CD8-positive, alpha-beta memory T cell (primary cell): ENCODE measurements at regions of chr6 and their contacts with region 1.

Region 1: GRCh38 chr6:11198663-11199603 is 33.5 kb downstream of the NEDD9 start:
- DNase-seq: peak; percentile 7 to 65 (median 34)
- H3K4me3 ChIP-seq: peak overlapping the region; percentile 17
- H3K4me3 Mint-ChIP-seq: peak overlapping the region; percentile 1 to 85 (median 60)
- H3K27ac ChIP-seq: peak overlapping the region; percentile 48
- H3K27ac Mint-ChIP-seq: peak overlapping the region; percentile 72 to 97 (median 94)
- H3K4me1 ChIP-seq: peaks cover 40% of the 10 kb centered on the region
- H3K4me1 Mint-ChIP-seq: peaks cover 55 to 78% (median 69%) of the 10 kb centered on the region in 3 donors
- H3K27me3 ChIP-seq: no peaks in the 10 kb centered on the region
- H3K27me3 Mint-ChIP-seq: no peaks in the 10 kb centered on the region

Region 2: DNA sequence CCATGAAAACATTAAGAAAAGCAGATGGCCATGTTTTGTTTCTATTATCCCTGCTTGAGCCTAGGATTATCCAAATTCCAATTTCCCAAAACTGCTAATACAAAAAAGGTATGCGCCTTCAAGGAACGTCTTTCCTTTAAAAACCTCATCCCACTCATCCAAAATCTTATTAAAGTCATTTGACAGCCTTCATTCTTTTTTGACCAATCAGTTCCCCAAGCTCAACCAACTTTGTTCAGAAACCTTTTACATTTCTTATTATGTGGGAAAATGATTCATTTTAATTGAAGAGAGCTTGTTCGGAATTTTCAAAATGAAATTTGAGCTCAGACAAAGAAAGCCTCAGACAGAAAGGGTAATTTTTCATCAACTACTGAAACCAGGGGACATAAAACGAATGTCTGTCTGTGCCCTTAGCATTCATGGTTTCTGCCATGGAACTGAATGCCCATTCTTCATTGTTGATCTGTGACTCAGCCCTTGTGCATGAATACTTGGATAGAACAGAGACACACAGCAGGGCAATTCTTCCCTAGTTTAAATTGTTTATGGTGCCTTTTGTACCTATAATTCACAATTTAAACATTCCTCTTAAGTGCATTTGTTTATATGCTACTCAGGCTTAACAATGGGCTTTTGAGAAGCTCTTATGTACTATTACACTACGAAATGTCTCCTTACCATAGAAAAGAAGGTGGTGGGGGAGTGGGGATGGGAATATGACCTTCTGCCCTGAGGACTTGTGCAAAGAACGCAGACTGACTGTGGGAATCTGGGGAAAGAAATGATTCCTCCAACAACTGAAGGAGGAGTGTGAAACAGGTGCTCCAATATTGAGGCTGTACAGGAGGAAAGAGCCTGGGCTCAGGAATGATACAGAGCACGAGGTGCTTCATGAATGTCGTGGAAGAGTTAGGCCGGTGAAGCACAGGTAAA is 37.6 kb before region 1 on chr6:
- CTCF ChIA-PET with region 1: no interaction called
- POLR2A ChIA-PET with region 1: no interaction called
- DNase-seq: no peak
- H3K4me3 ChIP-seq: no peak overlapping the region
- H3K4me3 Mint-ChIP-seq: no peak overlapping the region
- H3K27ac ChIP-seq: no peak overlapping the region
- H3K27ac Mint-ChIP-seq: no peak overlapping the region
- H3K4me1 ChIP-seq: no peaks in the 10 kb centered on the region
- H3K4me1 Mint-ChIP-seq: peaks cover 11 to 23% (median 16%) of the 10 kb centered on the region in 3 donors
- H3K27me3 ChIP-seq: no peaks in the 10 kb centered on the region
- H3K27me3 Mint-ChIP-seq: no peaks in the 10 kb centered on the region

Region 3: GRCh38 chr6:11172501-11173332 is 26.2 kb before region 1 on chr6:
- CTCF ChIA-PET with region 1: interaction called, 10 read pairs
- POLR2A ChIA-PET with region 1: no interaction called
- DNase-seq: peak; percentile 55 to 83 (median 69)
- H3K4me3 ChIP-seq: peak overlapping the region; percentile 1
- H3K4me3 Mint-ChIP-seq: peak overlapping the region in 6 of 7 donors; percentile 60 to 82 (median 68)
- H3K27ac ChIP-seq: no peak overlapping the region
- H3K27ac Mint-ChIP-seq: peak overlapping the region; percentile 13 to 92 (median 62)
- H3K4me1 ChIP-seq: peaks cover 10% of the 10 kb centered on the region
- H3K4me1 Mint-ChIP-seq: peaks cover 12 to 26% (median 15%) of the 10 kb centered on the region in 3 donors
- H3K27me3 ChIP-seq: no peaks in the 10 kb centered on the region
- H3K27me3 Mint-ChIP-seq: no peaks in the 10 kb centered on the region